Transverse colon (tissue), 4 donors: ENCODE measurements at regions of chr17 and their contacts with region 1.

Region 1: GRCh38 chr17:58728786-58729185 is 26.9 kb upstream of the PPM1E start:
- DNase-seq: no peak
- H3K4me3 ChIP-seq: no peak overlapping the region
- H3K27ac ChIP-seq: no peak overlapping the region
- H3K4me1 ChIP-seq: no peaks in the 10 kb centered on the region
- H3K27me3 ChIP-seq: no peaks in the 10 kb centered on the region
- CTCF ChIP-seq: no peak
- EP300 ChIP-seq: no peak
- POLR2A ChIP-seq: no peak

Region 2: DNA sequence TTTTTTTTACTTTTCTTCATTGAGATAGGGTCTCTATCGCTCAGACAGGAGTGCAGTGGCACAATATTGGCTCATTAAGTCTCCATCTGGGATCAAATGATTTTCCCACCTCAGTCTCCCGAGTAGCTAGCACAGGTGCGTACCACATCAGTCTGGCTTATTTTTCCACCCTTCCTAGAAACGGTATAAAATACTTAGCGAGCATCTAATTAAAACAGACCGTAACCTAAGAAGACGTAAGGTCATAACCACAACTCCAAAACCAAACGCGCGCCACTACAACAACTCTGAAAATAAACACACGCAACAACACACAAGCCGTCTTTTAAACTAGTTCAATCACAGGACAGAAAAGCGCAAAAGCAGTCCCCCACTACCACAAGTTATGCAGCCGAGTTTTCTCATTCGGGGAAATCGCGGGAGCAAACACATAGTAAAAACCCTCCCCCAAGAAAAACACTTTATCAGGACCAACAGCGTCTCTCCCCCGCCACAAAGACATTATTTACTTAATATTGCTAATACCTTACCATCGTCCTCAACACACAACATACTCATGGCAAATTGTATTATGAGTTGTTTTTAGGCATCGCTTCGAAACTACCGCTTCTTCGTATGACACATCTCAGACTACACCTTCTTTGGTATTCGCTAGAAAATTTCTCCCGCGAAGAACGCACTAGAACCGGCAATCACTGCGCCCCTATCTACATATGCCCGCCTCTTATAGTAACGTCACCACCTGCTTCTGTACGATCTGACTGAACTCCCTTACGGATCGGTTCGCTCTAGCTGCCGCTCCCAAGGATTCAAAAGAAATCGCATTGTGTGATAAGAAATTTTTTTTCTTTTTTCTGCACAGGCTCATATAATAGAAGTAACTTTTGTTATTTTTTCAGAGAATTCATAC is 69.7 kb before region 1 on chr17:
- in situ Hi-C with region 1: no loop called
- intact Hi-C with region 1: no loop called
- DNase-seq: peak; percentile 83
- H3K4me3 ChIP-seq: peak overlapping the region; percentile 15 to 48 (median 28)
- H3K27ac ChIP-seq: peak overlapping the region; percentile 52 to 85 (median 64)
- H3K4me1 ChIP-seq: peaks cover 0 to 8% (median 0%) of the 10 kb centered on the region in 4 donors
- H3K27me3 ChIP-seq: no peaks in the 10 kb centered on the region
- CTCF ChIP-seq: no peak
- EP300 ChIP-seq: no peak
- POLR2A ChIP-seq: peak; percentile 97

Region 3: DNA sequence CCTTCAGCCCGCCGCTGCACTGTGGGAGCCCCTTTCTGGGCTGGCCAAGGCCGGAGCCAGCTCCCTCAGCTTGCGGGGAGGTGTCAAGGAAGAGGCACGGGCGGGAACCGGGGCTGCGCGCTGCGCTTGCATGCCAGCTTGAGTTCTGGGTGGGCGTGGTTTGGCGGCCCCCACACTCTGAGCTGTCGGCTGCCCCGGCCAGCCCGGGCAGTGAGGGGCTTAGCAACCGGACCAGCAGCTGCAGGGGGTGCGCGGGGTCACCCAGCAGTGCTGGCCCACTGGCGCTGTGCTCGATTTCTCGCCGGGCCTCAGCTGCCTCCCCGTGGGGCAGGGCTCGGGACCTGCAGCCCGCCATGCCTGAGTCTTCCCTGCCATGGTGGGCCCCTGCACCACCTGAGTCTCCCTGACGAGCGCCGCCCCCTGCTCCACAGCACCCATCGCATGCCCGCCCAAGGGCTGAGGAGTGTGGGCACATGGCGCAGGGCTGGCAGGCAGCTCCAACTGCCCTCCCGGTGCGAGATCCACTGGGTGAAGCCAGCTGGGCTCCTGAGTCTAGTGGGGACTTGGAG is 443.7 kb after region 1 on chr17:
- in situ Hi-C with region 1: no loop called
- intact Hi-C with region 1: loop called (anchors 5 kb)
- DNase-seq: no peak
- H3K4me3 ChIP-seq: no peak overlapping the region
- H3K27ac ChIP-seq: no peak overlapping the region
- H3K4me1 ChIP-seq: no peaks in the 10 kb centered on the region
- H3K27me3 ChIP-seq: no peaks in the 10 kb centered on the region
- CTCF ChIP-seq: no peak
- EP300 ChIP-seq: no peak
- POLR2A ChIP-seq: no peak